Activated naive CD8-positive, alpha-beta T cell treated with anti-CD3 and anti-CD28 coated beads, Interleukin-2, amount 10 ng/mL, durations not matched to agents 7 days and 5 days (primary cell): ENCODE measurements at regions of chr5 and their contacts with region 1.

Region 1: DNA sequence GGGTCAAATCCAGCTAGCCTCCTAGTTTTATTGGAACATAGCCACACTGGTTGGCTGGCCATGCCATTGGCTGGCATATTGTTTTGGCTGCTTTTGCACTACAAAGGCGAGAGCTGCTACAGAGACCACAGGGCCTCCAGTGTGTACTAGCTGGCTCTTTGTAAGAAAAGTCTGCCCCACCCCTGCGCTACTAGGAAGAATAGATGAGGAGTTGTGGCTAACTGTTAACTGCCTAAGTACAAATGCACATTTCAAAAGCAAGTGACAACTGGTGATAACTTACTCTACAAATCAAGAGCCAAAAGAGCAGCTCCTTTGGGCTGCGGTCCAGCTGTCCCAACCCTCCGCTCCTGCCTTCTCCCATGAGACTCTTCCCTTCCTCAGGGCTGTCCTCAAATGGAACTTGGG is 63.9 kb downstream of the SERINC5 start:
- DNase-seq: peak; percentile 64
- ATAC-seq: peak; percentile 81
- H3K4me3 Mint-ChIP-seq: peak overlapping the region; percentile 73
- H3K27ac Mint-ChIP-seq: peak overlapping the region; percentile 93
- H3K4me1 Mint-ChIP-seq: peaks cover 76% of the 10 kb centered on the region
- H3K27me3 Mint-ChIP-seq: no peaks in the 10 kb centered on the region

Region 2: DNA sequence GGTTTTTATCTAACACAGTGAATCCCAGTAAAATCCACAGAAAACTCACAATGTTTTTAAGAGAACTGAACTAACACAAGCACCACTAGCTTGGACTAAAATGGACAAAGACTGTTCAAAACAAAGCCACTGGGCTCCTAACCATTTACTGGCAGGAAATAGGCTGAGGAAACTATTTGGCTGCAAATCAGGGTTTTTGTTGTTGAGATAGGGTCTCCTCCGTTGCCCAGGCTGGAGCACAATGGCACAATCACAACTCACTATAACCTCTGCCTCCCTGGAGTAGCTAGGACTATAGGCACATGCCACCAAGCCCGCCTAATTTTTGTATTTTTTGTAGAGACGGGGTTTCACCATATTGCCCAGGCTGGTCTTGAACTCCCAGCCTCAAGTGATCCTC is 57.1 kb before region 1 on chr5:
- POLR2A ChIA-PET with region 1: interaction called, 13 read pairs
- DNase-seq: no peak
- ATAC-seq: no peak
- H3K4me3 Mint-ChIP-seq: peak overlapping the region; percentile 4
- H3K27ac Mint-ChIP-seq: peak overlapping the region; percentile 91
- H3K4me1 Mint-ChIP-seq: peaks cover 44% of the 10 kb centered on the region
- H3K27me3 Mint-ChIP-seq: no peaks in the 10 kb centered on the region

Region 3: DNA sequence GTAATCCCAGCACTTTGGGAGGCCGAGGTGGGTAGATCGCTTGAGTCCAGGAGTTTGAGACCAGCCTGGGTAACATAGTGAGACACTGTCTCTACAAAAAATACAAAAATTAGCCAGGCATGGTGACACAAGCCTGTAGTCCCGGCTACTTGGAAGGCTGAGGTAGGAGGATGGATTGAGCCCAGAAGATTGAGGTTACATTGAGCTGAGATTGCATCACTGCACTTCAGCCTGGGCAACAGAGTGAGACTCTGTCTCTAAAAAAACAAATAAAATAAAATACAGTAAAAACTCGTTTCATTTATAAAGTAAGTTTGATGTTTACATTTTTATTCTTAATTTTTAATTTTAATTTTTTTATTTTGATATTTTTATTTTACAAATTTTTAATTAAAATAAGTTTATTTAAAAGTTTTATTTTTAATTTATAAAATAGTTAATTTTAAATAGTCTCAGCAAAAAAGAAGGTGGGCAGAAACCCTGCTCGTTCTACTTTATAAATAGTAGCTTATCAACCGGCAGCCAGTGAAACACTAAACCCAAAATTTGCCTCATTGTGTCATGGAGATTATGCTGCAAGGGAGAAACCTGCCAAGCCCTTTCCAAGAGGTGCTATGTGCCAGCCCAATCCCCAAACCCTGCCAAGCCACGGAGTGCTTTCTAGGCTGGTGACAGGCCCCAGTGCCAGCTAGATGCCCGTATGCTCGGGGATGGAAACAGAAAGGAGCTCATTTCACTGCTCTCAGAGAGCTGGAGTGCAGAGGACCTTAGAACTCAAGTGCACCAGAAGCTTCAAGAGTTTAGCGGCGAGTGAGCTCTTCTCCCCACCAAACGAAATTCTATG is 25.0 kb after region 1 on chr5:
- POLR2A ChIA-PET with region 1: interaction called, 46 read pairs
- DNase-seq: peak; percentile 56
- ATAC-seq: peak; percentile 37
- H3K4me3 Mint-ChIP-seq: peak overlapping the region; percentile 88
- H3K27ac Mint-ChIP-seq: peak overlapping the region; percentile 89
- H3K4me1 Mint-ChIP-seq: peaks cover 73% of the 10 kb centered on the region
- H3K27me3 Mint-ChIP-seq: no peaks in the 10 kb centered on the region